B cell (primary cell): ENCODE measurements at regions of chr4 and their contacts with region 1.

Region 1: GRCh38 chr4:40173470-40173875 is 23.4 kb upstream of the RHOH start:
- DNase-seq: peak; percentile 64
- ATAC-seq: peak; percentile 88
- H3K4me3 ChIP-seq: peak overlapping the region in 2 of 5 experiments; percentile 6 to 56
- H3K4me3 Mint-ChIP-seq: peak overlapping the region; percentile 79
- H3K27ac ChIP-seq: peak overlapping the region; percentile 48 to 66
- H3K27ac Mint-ChIP-seq: peak overlapping the region; percentile 81
- H3K4me1 ChIP-seq: peaks cover 30 to 37% of the 10 kb centered on the region in 2 donors
- H3K4me1 Mint-ChIP-seq: peaks cover 53% of the 10 kb centered on the region
- H3K27me3 ChIP-seq: no peaks in the 10 kb centered on the region
- H3K27me3 Mint-ChIP-seq: no peaks in the 10 kb centered on the region
- CTCF ChIP-seq: no peak

Region 2: GRCh38 chr4:40185830-40186664 is 12.6 kb after region 1 on chr4:
- CTCF ChIA-PET with region 1: interaction called, 5 read pairs
- POLR2A ChIA-PET with region 1: no interaction called
- intact Hi-C with region 1: loop called (anchors 1 kb)
- DNase-seq: peak; percentile 87
- ATAC-seq: peak; percentile 79
- H3K4me3 ChIP-seq: peak overlapping the region; percentile 11 to 61 (median 37)
- H3K4me3 Mint-ChIP-seq: peak overlapping the region; percentile 85
- H3K27ac ChIP-seq: peak overlapping the region; percentile 92 to 94
- H3K27ac Mint-ChIP-seq: peak overlapping the region; percentile 97
- H3K4me1 ChIP-seq: peaks cover 60 to 88% of the 10 kb centered on the region in 2 donors
- H3K4me1 Mint-ChIP-seq: peaks cover 76% of the 10 kb centered on the region
- H3K27me3 ChIP-seq: no peaks in the 10 kb centered on the region
- H3K27me3 Mint-ChIP-seq: no peaks in the 10 kb centered on the region
- CTCF ChIP-seq: no peak

Region 3: DNA sequence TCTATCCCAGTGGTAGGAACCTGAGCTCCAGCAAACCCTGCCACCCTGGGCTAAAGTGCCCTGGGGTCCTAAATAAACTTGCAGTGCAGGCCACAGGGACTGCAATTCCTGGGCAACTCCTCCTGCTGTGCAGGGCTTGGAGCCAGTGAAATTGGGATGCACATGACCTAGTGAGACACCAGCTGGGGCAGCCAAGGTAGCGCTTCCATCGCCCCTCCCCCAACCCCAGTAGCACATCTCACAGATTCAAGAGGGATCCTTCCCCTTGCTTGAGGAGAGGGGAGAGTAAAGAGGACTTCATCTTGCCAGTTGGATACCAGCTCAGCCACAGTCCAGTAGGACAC is 205.8 kb after region 1 on chr4:
- CTCF ChIA-PET with region 1: no interaction called
- POLR2A ChIA-PET with region 1: no interaction called
- intact Hi-C with region 1: no loop called
- DNase-seq: no peak
- ATAC-seq: no peak
- H3K4me3 ChIP-seq: no peak overlapping the region
- H3K4me3 Mint-ChIP-seq: no peak overlapping the region
- H3K27ac ChIP-seq: no peak overlapping the region
- H3K27ac Mint-ChIP-seq: no peak overlapping the region
- H3K4me1 ChIP-seq: no peaks in the 10 kb centered on the region
- H3K4me1 Mint-ChIP-seq: no peaks in the 10 kb centered on the region
- H3K27me3 ChIP-seq: no peaks in the 10 kb centered on the region
- H3K27me3 Mint-ChIP-seq: peaks cover 6% of the 10 kb centered on the region
- CTCF ChIP-seq: no peak